HEK293T (cell line): ENCODE measurements at regions of chr7 and their contacts with region 1.

Region 1: DNA sequence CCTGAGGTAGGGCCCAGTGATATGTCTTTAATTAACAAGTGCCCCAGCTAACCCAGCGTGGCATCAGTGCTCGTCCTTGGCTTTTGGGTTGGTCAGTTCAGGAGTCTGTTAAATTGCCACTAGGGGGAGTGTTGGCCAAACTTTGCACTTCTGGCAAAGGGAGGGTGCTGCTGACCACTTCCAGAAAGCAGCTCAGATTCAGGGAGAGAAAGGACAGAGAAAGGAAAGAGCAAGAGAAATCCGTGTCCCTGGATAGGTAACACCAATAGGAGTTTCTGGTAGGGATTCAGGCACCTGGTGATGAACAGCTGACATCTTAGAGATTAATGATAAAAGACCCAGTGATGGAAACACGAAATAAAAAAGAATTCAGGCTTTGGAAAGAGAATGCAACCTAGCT is 243.1 kb upstream of the AOAH start:
- DNase-seq: peak; percentile 74

Region 2: DNA sequence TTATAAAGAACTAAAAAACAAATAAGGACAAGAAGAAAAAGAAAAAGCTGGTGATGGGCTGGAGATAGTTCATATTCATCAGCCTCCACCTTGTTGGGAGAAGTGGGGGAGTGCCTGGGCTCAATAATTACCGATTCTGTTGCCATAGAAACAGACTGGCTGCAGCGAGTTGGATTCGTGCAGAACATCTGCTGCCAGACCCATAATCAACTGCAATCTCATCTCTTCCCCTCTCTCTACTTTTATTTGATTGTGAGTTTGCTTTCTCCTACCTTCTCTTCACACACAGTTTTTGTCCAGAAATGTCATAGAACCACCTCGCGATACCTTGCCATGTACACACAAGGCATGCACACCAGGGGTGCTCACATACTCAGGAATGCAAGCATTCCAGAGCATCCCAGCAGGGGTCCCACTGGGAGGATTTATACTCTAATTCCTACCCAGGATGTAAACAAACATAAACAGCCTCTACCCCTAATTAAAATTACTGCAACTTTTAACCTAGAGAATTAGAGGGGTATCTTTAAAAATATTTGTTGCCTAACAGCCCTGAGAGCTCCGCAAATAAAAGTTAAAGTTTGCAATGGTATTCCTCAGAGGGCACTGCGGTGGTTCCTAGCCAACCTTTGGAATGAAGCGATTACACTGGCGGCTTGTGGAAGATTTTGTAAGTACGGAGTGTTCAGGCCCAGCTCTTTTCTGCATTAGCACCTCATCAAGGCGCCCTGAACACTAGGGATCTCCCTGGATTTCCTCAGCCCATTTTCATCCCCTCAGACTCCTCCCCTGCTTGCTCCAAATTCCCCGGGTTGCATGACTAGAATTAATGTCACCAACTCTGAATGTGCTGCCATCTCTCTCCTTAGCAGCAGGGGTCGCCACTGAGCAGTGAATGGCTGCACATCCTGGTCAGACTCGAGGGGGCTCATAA is 19.3 kb after region 1 on chr7:
- CTCF ChIA-PET with region 1: interaction called, 21 read pairs
- POLR2A ChIA-PET with region 1: no interaction called
- DNase-seq: peak; percentile 83

Region 3: GRCh38 chr7:37516610-37517108 is 549.3 kb after region 1 on chr7:
- CTCF ChIA-PET with region 1: no interaction called
- POLR2A ChIA-PET with region 1: no interaction called
- DNase-seq: no peak